ENCODE measurements at regions of chr15 and their contacts with region 1.

Region 1: GRCh38 chr15:90886041-90886614 is 1.8 kb downstream of the FES start:
- DNase-seq: peak; percentile 90
- ATAC-seq: peak; percentile 43
- H3K4me3 Mint-ChIP-seq: no peak overlapping the region
- H3K27ac Mint-ChIP-seq: peak overlapping the region; percentile 31
- H3K4me1 Mint-ChIP-seq: peaks cover 12% of the 10 kb centered on the region
- H3K27me3 Mint-ChIP-seq: peaks cover 3% of the 10 kb centered on the region

Region 2: DNA sequence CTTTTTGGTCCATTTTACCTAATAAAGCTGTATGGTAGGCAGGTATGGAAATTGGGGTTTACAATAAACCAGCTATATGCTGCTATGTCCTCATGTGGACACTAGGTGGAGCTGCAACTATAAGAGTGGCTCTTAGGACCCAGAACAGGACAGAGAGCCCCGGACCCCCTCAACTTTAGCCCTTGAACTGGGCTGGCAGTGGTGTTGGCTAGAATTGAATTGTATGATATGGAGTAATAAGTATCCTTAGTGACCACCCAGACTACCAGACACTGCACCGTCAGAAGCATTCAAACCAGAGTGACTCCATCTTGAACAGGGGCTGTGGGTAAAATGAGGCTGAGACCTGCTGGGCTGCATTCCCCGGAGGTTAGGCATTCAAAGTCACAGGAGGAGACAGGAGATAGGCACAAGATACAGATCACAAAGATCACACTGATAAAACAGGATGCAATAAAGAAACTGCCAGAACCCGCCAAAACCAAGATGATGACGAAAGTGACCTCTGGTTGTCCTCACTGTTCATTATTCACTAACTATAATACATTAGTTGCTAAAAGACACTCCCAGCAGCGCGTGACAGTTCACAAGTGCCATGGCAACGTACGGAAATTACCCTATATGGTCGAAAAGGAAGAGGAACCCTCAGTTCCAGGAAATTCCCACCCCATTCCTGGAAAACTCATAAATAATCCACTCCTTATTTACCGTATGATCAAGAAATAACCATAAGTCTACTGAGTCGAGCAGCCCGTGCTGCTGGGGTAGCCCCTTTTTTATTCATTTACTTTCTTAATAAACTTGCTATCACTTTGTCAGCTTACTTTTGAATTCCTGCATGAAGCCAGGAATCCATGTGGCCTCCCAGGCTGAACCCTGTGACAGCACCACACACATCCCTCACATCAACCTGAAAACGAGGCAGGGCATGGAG is 237.7 kb before region 1 on chr15:
- CTCF ChIA-PET with region 1: interaction called, 27 read pairs
- POLR2A ChIA-PET with region 1: no interaction called
- intact Hi-C with region 1: loop called (anchors 1 kb)
- DNase-seq: peak; percentile 78
- ATAC-seq: peak; percentile 82
- H3K4me3 Mint-ChIP-seq: peak overlapping the region; percentile 39
- H3K27ac Mint-ChIP-seq: peak overlapping the region; percentile 93
- H3K4me1 Mint-ChIP-seq: peaks cover 28% of the 10 kb centered on the region
- H3K27me3 Mint-ChIP-seq: no peaks in the 10 kb centered on the region

Region 3: DNA sequence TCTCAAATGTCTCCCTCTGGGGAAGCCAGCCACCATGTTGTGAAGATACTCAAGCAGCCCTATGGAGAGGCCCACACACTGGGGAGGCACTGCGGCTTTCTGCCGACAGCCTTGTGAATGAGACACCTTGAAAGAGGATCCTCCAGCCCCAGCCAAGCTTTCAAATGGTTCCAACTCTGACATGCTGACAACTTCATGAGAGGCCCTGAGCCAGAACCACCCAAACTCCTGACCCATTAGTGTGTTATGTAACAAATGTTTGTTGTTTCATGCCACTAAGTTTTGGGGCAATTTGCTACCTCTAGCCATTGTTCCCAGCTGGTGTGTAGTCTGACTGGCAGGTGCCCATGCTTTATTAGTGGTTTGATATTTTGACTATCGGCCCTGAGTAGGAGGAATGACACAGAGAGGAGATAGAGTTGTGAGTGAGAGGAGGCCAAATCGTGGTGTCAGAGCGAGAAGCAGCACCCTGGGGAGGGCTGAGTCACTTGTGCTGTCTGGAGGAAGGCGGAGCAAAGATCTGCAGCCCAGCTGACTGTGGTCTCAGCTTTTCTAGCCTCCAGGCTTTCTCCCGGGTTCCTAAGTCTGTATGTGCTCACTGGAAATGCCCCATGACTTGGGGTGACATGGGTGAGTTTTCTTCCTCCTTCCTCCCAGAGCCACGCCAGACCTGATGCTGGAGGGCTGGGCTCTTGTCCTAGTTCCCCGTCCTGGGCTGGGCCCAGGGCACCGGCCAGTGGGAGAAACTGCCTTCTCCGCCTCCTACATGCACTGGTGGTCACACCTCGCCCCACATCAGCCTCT is 225.7 kb before region 1 on chr15:
- CTCF ChIA-PET with region 1: no interaction called
- POLR2A ChIA-PET with region 1: no interaction called
- intact Hi-C with region 1: loop called in 1 of 2 experiments (anchors 5 kb)
- DNase-seq: peak; percentile 89
- ATAC-seq: peak; percentile 96
- H3K4me3 Mint-ChIP-seq: peak overlapping the region; percentile 52
- H3K27ac Mint-ChIP-seq: peak overlapping the region; percentile 43
- H3K4me1 Mint-ChIP-seq: peaks cover 73% of the 10 kb centered on the region
- H3K27me3 Mint-ChIP-seq: peaks cover 47% of the 10 kb centered on the region

Region 4: GRCh38 chr15:90691982-90692773 is 193.9 kb before region 1 on chr15:
- CTCF ChIA-PET with region 1: interaction called, 3 read pairs
- POLR2A ChIA-PET with region 1: no interaction called
- intact Hi-C with region 1: loop called (anchors 1 to 10 kb)
- DNase-seq: no peak
- ATAC-seq: no peak
- H3K4me3 Mint-ChIP-seq: no peak overlapping the region
- H3K27ac Mint-ChIP-seq: no peak overlapping the region
- H3K4me1 Mint-ChIP-seq: peaks cover 13% of the 10 kb centered on the region
- H3K27me3 Mint-ChIP-seq: no peaks in the 10 kb centered on the region

Region 5: DNA sequence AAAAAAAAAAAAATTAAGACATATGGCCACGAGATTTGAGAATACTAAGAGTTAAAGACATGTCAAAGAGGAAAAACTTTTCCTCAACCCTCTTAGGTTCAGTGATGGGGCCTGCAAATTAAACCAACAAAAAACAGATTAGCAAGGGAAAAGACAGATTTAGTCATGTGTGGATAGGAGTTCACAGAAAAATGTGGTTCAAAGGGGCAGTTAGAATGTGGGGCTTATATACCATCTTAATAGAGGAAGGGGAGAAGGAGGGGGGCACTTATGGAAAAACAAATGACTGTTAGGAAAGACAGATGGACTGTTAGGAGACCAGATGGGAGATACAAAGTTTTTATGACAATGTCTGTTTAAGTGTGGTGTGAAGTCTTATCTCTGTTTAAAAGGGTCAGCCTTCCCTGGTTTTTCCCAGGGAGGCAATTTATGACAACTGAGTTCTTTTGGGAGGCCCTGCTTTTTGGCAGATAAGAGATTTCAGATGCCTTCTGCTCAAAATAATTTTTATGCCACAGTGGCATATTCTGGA is 86.4 kb before region 1 on chr15:
- CTCF ChIA-PET with region 1: interaction called, 11 read pairs
- POLR2A ChIA-PET with region 1: no interaction called
- intact Hi-C with region 1: no loop called
- DNase-seq: no peak
- ATAC-seq: no peak
- H3K4me3 Mint-ChIP-seq: no peak overlapping the region
- H3K27ac Mint-ChIP-seq: peak overlapping the region; percentile 0
- H3K4me1 Mint-ChIP-seq: no peaks in the 10 kb centered on the region
- H3K27me3 Mint-ChIP-seq: no peaks in the 10 kb centered on the region

Region 6: DNA sequence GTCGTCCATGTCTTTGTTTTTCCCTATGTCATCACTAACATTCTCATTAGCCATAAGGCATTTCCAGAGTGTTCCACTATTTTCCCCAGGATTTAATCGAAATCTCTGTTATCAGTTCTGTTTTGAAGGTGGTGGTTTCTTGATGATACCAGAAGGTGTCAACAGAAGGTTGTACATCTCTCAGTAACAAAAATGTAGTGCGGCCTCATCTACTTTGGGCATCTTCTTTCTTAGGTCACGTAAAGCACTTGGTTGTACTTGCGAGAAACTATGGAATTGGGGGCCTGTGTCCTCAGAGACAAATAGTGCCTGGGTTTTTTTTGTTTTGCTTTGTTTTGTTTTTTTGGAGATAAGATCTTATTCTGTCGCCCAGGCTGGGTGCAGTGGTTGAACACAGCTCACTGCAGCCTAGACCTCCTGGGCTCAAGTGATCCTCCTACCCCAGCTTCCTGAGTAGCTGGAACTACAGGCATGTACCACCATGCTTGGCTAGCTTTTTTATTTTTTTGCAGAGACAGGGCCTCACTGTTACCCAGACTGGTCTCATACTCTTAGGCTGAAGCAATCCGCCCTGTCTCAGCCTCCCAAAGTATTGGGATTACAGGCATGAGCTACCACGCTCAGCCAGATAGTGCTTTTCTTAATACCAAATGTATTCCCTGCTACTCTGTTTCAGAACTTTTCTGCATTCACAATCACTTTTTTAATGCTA is 78.9 kb before region 1 on chr15:
- CTCF ChIA-PET with region 1: interaction called, 7 read pairs
- POLR2A ChIA-PET with region 1: no interaction called
- intact Hi-C with region 1: loop called in 1 of 2 experiments (anchors 2 kb)
- DNase-seq: no peak
- ATAC-seq: peak; percentile 22
- H3K4me3 Mint-ChIP-seq: no peak overlapping the region
- H3K27ac Mint-ChIP-seq: peak overlapping the region; percentile 31
- H3K4me1 Mint-ChIP-seq: peaks cover 12% of the 10 kb centered on the region
- H3K27me3 Mint-ChIP-seq: no peaks in the 10 kb centered on the region

Region 7: GRCh38 chr15:90818251-90819210 is 67.6 kb before region 1 on chr15:
- CTCF ChIA-PET with region 1: interaction called, 10 read pairs
- POLR2A ChIA-PET with region 1: no interaction called
- intact Hi-C with region 1: loop called in 1 of 2 experiments (anchors 1 kb)
- DNase-seq: peak; percentile 56
- ATAC-seq: peak; percentile 47
- H3K4me3 Mint-ChIP-seq: no peak overlapping the region
- H3K27ac Mint-ChIP-seq: peak overlapping the region; percentile 90
- H3K4me1 Mint-ChIP-seq: peaks cover 44% of the 10 kb centered on the region
- H3K27me3 Mint-ChIP-seq: no peaks in the 10 kb centered on the region

Region 8: DNA sequence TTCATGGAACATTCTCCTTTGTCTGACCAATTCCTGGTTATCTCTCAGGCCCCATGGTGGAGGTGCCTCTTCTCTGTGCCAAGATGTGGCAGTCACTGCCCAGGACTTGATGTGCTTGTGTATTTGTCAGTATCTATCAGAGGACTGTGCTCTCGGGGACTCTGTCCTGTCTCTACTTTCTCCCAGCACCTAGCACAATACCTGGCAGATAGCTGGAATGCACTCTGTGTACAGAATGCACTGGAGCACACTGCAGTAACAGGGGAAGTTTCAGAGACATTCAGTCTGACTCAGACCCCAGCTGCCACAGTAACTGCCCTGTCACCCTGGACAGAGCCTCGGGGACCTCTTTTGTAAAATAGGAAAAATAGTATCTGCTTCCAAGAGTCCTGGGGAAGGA is 179.4 kb after region 1 on chr15:
- CTCF ChIA-PET with region 1: no interaction called
- POLR2A ChIA-PET with region 1: no interaction called
- intact Hi-C with region 1: no loop called
- DNase-seq: no peak
- ATAC-seq: no peak
- H3K4me3 Mint-ChIP-seq: no peak overlapping the region
- H3K27ac Mint-ChIP-seq: no peak overlapping the region
- H3K4me1 Mint-ChIP-seq: no peaks in the 10 kb centered on the region
- H3K27me3 Mint-ChIP-seq: peaks cover 15% of the 10 kb centered on the region

Region 9: GRCh38 chr15:91311986-91312385 is 425.9 kb after region 1 on chr15:
- CTCF ChIA-PET with region 1: no interaction called
- POLR2A ChIA-PET with region 1: no interaction called
- intact Hi-C with region 1: no loop called
- DNase-seq: no peak
- ATAC-seq: no peak
- H3K4me3 Mint-ChIP-seq: no peak overlapping the region
- H3K27ac Mint-ChIP-seq: no peak overlapping the region
- H3K4me1 Mint-ChIP-seq: peaks cover 38% of the 10 kb centered on the region
- H3K27me3 Mint-ChIP-seq: peaks cover 7% of the 10 kb centered on the region

Measured in activated CD4-positive, alpha-beta T cell treated with anti-CD3 and anti-CD28 coated beads for 36 hours (primary cell).